OCI-LY7 (cell line): ENCODE measurements at regions of chr10 and their contacts with region 1.

Region 1: GRCh38 chr10:5788969-5789368 is 24.3 kb downstream of the GDI2 start:
- DNase-seq: no peak
- H3K4me3 ChIP-seq: no peak overlapping the region
- H3K27ac ChIP-seq: no peak overlapping the region
- H3K4me1 ChIP-seq: no peaks in the 10 kb centered on the region
- CTCF ChIP-seq: no peak

Region 2: GRCh38 chr10:5800790-5801189 is 11.8 kb after region 1 on chr10:
- CTCF ChIA-PET with region 1: no interaction called
- POLR2A ChIA-PET with region 1: interaction called, 12 read pairs
- intact Hi-C with region 1: no loop called
- DNase-seq: no peak
- H3K4me3 ChIP-seq: no peak overlapping the region
- H3K27ac ChIP-seq: no peak overlapping the region
- H3K4me1 ChIP-seq: peaks cover 16% of the 10 kb centered on the region
- CTCF ChIP-seq: no peak